Heart right ventricle (tissue), 16 donors: ENCODE measurements at regions of chr17 and their contacts with region 1.

Region 1: DNA sequence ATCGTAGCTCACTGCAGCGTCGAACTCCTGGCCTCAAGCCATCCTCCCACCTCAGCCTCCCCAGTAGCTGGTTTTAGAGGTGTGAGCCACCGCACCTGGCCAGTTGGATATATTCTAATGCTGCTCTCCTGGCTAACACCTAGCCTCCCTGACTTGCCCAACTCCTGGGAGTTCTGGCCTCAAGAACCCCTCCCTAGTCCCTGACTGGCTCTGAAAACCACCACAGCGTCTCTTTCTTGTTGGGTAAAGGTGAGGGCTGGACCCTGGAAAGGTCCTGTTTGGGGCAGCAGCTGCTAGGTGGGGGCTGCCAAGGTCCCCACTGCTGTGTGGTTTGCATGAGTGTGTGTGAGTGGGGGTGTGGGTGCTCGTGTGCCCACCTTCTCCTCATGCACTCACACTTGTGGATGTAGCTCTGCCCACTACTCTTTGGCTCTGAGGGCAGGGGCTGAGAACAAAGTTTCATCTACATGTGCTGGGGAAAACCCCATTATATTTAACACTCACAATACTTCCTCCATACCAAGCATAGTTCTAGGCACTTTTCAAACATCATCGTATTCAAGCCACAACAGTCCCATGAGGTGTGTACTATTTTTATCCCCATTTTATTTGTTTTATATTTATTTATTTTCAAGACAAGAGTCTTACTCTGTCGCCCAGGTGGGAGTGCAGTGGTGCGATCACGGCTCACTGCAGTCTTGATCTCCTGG is 7.1 kb upstream of the SPNS3 start:
- DNase-seq: no peak
- ATAC-seq: no peak
- H3K4me3 ChIP-seq: no peak overlapping the region
- H3K27ac ChIP-seq: no peak overlapping the region
- H3K4me1 ChIP-seq: peaks cover 0 to 13% (median 0%) of the 10 kb centered on the region in 9 donors
- H3K27me3 ChIP-seq: no peaks in the 10 kb centered on the region
- CTCF ChIP-seq: no peak

Region 2: GRCh38 chr17:4365103-4365627 is 61.5 kb before region 1 on chr17:
- intact Hi-C with region 1: no loop called
- DNase-seq: peak; percentile 92 to 93
- ATAC-seq: peak; percentile 77 to 89 (median 84)
- H3K4me3 ChIP-seq: peak overlapping the region; percentile 82 to 100 (median 98)
- H3K27ac ChIP-seq: peak overlapping the region; percentile 91 to 100 (median 98)
- H3K4me1 ChIP-seq: peaks cover 2 to 49% (median 34%) of the 10 kb centered on the region in 9 donors
- H3K27me3 ChIP-seq: no peaks in the 10 kb centered on the region
- CTCF ChIP-seq: no peak

Region 3: DNA sequence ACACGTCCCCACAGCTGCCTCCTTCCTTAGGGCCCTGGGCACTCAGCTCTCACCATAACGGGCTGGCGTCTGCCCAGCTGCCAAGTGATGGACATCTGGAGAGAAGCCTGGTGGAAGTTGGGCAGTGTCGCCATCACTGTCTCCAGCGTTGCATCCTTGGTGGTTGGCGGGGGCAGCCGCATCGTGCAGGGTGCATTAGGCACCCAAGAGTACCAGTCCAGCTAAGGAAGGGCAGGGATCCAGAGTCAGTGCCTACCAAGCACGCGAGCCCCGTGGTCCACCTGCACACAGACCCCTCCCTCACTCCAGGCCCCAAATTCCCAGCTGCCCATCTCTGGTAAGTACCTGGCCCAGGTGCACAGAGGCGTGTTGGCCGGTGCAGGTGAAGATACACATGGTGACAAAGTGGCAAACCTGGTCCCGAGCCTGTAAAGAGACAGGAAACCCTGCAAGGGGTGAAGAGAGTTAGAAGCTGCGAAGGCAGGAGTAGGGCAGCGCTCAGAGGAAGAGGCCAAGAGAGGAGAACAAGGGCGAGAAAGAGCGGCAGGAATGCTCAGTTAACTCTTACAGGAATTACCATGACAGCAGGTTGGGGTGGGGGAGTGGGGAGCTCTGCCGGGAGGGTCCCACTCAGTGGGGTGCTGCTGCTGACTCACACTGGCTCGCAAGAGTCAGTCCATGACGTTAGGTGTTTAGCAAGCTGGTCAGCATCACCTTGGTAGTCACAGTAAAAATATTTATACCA is 205.4 kb after region 1 on chr17:
- intact Hi-C with region 1: loop called in 9 of 10 experiments (anchors 2 to 10 kb)
- DNase-seq: no peak
- ATAC-seq: peak in 1 of 8 donors; percentile 35
- H3K4me3 ChIP-seq: no peak overlapping the region
- H3K27ac ChIP-seq: no peak overlapping the region
- H3K4me1 ChIP-seq: peaks cover 0 to 18% (median 0%) of the 10 kb centered on the region in 9 donors
- H3K27me3 ChIP-seq: peaks cover 4 to 43% (median 27%) of the 10 kb centered on the region in 7 donors
- CTCF ChIP-seq: no peak